ENCODE measurements at regions of chr2 and their contacts with region 1.

Region 1: GRCh38 chr2:7097348-7097895 is 180.2 kb downstream of the RNF144A start:
- DNase-seq: peak; percentile 73 to 92
- H3K4me3 ChIP-seq: no peak overlapping the region
- H3K27ac ChIP-seq: no peak overlapping the region
- H3K4me1 ChIP-seq: peaks cover 0 to 5% (median 3%) of the 10 kb centered on the region in 4 experiments; a peak in 3 of 7 replicates
- H3K27me3 ChIP-seq: no peaks in the 10 kb centered on the region; a peak in 1 of 7 replicates
- CTCF ChIP-seq: peak; percentile 83 to 100 (median 98)
- EP300 ChIP-seq: no peak
- POLR2A ChIP-seq: no peak
- RAD21 ChIP-seq: peak; percentile 96 to 97

Region 2: DNA sequence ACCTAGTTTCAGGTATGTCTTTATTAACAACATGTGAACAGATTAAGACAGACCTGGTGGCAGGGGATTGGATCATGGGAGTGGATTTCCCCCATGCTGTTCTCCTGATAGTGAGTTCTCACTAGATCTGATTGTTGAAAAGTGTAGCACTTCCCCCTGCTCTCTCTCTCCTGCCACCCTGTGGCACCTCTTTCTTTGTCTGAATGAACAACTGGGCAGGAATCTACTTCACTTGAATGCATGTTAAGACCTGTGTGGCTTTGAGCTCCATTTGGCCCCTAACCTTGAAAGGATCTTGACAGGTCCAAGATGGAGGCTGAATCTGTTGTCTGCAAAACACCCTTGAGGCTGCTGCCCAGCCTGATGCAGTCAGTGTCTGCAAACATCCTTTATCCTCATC is 14.2 kb after region 1 on chr2:
- CTCF ChIA-PET with region 1: interaction called, 55 read pairs
- POLR2A ChIA-PET with region 1: no interaction called
- DNase-seq: no peak
- H3K4me3 ChIP-seq: no peak overlapping the region
- H3K27ac ChIP-seq: no peak overlapping the region
- H3K4me1 ChIP-seq: 0 out of 7 replicates have a peak, but pooled peaks cover 0 to 2% (median 0%) of the 10 kb centered on the region in 4 experiments
- H3K27me3 ChIP-seq: no peaks in the 10 kb centered on the region; a peak in 2 of 7 replicates
- CTCF ChIP-seq: peak in 1 of 3 experiments; percentile 15; a peak in 1 of 4 replicates
- EP300 ChIP-seq: no peak
- POLR2A ChIP-seq: no peak
- RAD21 ChIP-seq: no peak; a peak in 1 of 4 replicates

Region 3: GRCh38 chr2:7118606-7119503 is 21.4 kb after region 1 on chr2:
- CTCF ChIA-PET with region 1: interaction called, 40 read pairs
- POLR2A ChIA-PET with region 1: no interaction called
- DNase-seq: no peak
- H3K4me3 ChIP-seq: no peak overlapping the region
- H3K27ac ChIP-seq: no peak overlapping the region
- H3K4me1 ChIP-seq: no peaks in the 10 kb centered on the region; a peak in 2 of 7 replicates
- H3K27me3 ChIP-seq: no peaks in the 10 kb centered on the region
- CTCF ChIP-seq: peak; percentile 39 to 63 (median 60)
- EP300 ChIP-seq: no peak
- POLR2A ChIP-seq: no peak
- RAD21 ChIP-seq: peak; percentile 86 to 90

Region 4: DNA sequence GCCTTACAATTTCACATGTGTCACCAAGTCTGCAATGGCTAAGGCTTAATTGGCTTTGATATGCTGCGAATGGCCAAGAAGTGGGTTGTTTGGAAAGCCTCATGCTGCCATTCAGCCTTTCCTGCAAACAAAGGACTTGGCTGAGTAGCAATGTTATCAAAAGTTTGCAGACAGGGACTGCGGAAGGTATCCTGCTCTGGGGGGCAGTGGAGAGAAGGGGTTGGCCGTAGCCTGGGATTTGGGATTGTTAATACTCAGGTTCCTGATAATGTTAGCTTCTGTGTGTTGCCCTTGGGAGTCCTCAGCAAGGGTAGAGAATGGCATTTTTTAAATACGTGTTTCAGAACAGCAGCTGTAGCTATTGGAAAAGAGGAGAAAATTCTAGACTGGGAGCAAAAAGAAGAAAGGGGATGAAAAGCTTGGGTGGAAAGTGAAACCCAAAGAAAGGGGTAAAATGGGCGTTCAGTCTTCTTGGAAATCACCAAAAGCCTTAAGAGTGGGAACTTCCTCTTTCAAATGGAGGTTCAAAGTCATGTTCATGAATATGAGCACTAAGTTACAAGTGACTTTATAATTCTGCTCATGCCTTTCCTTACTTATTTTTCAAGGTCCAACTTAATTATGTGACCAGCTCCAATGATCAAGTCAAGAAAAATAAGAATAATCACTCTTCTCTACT is 144.9 kb after region 1 on chr2:
- CTCF ChIA-PET with region 1: no interaction called
- POLR2A ChIA-PET with region 1: no interaction called
- DNase-seq: no peak
- H3K4me3 ChIP-seq: no peak overlapping the region
- H3K27ac ChIP-seq: no peak overlapping the region
- H3K4me1 ChIP-seq: peaks cover 0 to 4% (median 1%) of the 10 kb centered on the region in 4 experiments; a peak in 2 of 7 replicates
- H3K27me3 ChIP-seq: no peaks in the 10 kb centered on the region
- CTCF ChIP-seq: no peak
- EP300 ChIP-seq: no peak
- POLR2A ChIP-seq: no peak
- RAD21 ChIP-seq: no peak